Ascending aorta (tissue), 2 donors: ENCODE measurements at regions of chrX and their contacts with region 1.

Region 1: DNA sequence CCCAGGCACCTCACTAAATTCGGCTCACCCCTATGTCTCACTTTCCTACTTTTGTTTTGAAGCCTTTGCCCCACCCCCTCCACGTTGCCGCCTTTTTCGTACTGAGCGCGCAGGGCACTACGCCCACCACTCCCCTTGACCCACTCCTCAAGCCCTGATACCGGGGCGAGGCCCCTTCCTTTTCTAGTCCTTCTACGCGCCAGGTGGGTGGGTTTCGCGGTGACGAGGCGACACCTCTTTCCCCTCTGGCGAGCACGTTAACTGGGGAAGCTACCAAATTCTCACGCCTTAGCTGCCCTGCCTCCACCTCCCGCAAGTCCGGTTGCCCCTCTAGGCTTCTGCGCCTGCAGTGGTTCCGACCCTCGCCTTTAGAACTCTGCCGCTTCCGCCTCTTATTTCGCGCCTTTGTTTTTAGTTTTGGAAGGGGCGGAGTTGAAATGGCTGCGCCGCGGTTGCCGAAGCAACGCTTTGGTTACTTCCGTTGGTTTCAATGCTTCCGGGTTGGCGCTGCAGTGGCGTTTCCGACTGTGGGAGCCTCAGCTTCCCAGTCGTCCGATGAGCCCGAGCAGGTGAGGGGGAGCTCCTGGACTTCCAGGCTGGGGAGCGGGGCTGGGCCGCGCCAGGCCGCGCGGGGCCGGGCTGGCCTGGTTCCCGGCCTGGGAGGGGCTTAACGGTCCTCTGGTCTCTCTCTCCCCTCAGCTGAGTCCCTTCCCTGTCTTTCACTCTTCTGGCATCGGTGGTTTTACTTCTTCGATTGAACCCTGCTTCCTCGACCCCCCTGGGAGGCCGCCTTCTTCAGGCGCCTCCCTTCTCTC is at the start of gene SLC25A14:
- DNase-seq: peak in 1 of 2 donors; percentile 78
- H3K4me3 ChIP-seq: peak within 1 kb of the TSS; percentile 58 to 73
- H3K27ac ChIP-seq: peak within 1 kb of the TSS; percentile 10 to 12
- H3K4me1 ChIP-seq: no peaks in the 10 kb centered on the region
- H3K27me3 ChIP-seq: no peaks in the 10 kb centered on the region
- CTCF ChIP-seq: no peak
- total RNA-seq, gene SLC25A14: 14.9 TPM

Region 2: GRCh38 chrX:129077424-129078170 is 1262.0 kb before region 1 on chrX:
- intact Hi-C with region 1: no loop called
- DNase-seq: no peak
- H3K4me3 ChIP-seq: no peak overlapping the region
- H3K27ac ChIP-seq: no peak overlapping the region
- H3K4me1 ChIP-seq: no peaks in the 10 kb centered on the region
- H3K27me3 ChIP-seq: no peaks in the 10 kb centered on the region
- CTCF ChIP-seq: no peak

Region 3: DNA sequence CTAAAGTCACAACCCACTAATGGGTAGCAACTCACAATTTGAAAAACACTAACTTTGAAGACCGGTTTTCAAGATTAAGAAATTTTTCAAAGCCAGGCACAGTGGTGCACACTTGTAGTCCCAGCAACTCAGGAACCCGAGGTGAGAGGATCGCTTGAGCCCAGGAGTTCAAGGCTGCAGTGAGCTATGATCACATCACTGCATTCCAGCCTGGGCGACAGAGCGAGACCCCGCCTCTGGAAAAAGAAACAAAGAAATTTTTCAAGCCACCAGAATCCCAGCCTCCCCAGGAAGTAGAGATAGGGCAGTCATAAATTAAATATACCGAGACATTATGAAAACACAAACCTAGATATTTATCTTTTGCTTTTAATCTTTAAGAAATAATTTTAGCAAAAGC is 829.3 kb before region 1 on chrX:
- intact Hi-C with region 1: no loop called
- DNase-seq: no peak
- H3K4me3 ChIP-seq: no peak overlapping the region
- H3K27ac ChIP-seq: no peak overlapping the region
- H3K4me1 ChIP-seq: no peaks in the 10 kb centered on the region
- H3K27me3 ChIP-seq: no peaks in the 10 kb centered on the region
- CTCF ChIP-seq: no peak

Region 4: DNA sequence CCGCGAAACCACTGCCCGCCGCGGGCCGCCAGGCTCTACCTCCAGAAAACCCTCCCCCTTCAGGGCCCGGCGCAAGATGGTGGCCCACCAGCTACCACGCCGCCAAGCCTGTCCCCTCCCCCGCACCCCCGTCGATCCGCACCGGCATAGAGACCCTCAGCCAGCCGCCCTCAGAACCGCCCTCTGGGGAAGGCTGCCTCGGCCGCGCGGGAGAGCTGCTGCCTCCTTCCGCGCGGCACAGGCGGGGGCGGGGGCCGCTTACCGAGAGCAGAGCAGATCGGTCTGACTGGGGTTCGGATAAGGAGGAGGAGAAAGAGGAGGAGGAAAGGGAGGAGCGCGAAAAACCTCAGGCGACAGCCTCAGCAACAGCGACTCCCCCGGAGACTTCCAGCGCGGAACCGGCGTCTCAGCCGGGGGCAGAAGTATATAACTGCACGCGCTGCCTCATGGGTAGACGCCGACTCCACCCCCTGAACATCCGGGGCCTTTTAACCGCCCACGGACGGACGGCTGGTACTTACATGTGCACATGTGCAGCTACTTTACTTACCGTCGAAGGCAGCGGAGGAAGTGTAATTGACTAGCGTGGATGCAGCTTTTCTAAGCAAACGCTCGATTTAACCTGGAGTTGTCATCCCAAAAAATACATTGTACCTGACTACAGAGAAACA is 71.0 kb before region 1 on chrX and contains the start of gene ZNF280C:
- intact Hi-C with region 1: loop called (anchors 1 kb)
- DNase-seq: peak; percentile 72 to 92
- H3K4me3 ChIP-seq: peak within 1 kb of the TSS; percentile 58 to 74
- H3K27ac ChIP-seq: peak within 1 kb of the TSS; percentile 83
- H3K4me1 ChIP-seq: no peaks in the 10 kb centered on the region
- H3K27me3 ChIP-seq: no peaks in the 10 kb centered on the region
- CTCF ChIP-seq: peak in 2 of 3 experiments; percentile 9 to 13
- total RNA-seq, gene ZNF280C: 5.0 TPM

Region 5: DNA sequence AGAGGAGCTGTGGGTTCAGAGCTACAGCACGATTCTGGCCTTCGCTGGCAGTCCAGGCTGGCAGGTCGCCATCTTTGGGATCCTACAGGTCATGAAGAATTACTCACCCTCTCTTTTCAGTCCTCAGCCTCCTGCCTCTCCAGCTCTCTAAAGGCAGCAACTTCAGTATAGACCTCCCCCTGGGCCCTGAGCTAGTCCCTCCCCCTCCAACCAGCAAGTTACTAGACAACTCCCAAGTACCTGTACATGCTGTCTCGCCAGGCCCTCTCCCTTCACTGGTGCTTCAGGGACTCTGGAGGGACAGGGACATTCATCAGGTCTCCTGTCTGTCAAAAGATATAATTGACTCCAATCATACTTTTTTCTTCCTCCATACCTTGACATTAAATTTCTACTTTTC is 45.9 kb after region 1 on chrX and contains the start of gene GPR119:
- intact Hi-C with region 1: no loop called
- DNase-seq: no peak
- H3K4me3 ChIP-seq: no peak within 1 kb of the TSS
- H3K27ac ChIP-seq: no peak within 1 kb of the TSS
- H3K4me1 ChIP-seq: no peaks in the 10 kb centered on the region
- H3K27me3 ChIP-seq: peaks cover 6% of the 10 kb centered on the region
- CTCF ChIP-seq: no peak
- total RNA-seq, gene GPR119: not detected

Region 6: DNA sequence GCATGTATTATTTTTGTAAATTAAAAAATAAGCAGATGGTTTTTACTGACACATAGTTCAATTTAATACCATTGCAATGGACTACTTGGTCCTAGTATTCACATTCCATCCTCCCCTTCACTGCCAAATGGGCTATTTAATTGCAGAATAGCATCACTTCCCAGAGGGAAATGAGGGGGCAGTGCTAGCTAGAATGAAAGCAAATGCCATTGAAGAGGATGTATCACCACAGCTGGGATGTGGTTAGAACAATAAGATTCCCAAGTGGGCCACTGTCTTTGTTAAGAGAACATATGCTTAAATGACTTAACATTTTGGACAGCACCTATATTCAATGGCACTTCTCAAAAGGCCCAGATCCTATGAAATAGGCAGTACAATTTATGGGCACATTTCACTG is 286.9 kb after region 1 on chrX:
- intact Hi-C with region 1: no loop called
- DNase-seq: no peak
- H3K4me3 ChIP-seq: no peak overlapping the region
- H3K27ac ChIP-seq: no peak overlapping the region
- H3K4me1 ChIP-seq: no peaks in the 10 kb centered on the region
- H3K27me3 ChIP-seq: no peaks in the 10 kb centered on the region
- CTCF ChIP-seq: no peak